MCF 10A (cell line): ENCODE measurements at regions of chr1 and their contacts with region 1.

Region 1: DNA sequence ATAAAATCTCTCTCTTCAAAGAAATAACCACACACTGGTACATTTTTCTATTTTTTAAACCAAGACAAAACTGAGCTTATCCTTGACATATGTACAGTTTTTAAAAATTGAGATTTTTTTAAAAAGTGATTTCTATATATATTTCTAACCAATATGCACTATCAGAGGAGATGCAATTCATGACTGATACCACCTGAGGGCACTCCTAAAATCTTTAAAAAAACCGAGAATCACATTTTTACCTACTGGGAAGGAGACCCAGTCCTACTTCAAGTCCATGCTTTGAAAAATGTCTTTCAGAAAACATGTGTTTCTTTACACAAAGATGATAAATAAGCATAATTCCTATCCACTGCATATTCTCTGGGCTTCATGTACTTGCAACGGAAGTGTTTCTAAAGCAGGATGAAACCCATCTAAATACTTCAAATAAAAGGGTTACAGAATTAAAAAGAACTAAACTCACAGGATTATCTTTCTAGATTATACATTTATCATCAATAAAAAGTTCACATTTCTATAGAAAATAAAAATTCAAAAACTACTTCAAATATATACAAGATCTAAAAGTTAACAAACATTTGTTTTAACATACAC is 98.6 kb downstream of the ENAH start:
- DNase-seq: peak; percentile 67
- H3K4me3 Mint-ChIP-seq: no peak overlapping the region
- H3K27ac Mint-ChIP-seq: no peak overlapping the region
- H3K4me1 Mint-ChIP-seq: peaks cover 2% of the 10 kb centered on the region
- H3K27me3 Mint-ChIP-seq: no peaks in the 10 kb centered on the region
- CTCF ChIP-seq: peak; percentile 85

Region 2: DNA sequence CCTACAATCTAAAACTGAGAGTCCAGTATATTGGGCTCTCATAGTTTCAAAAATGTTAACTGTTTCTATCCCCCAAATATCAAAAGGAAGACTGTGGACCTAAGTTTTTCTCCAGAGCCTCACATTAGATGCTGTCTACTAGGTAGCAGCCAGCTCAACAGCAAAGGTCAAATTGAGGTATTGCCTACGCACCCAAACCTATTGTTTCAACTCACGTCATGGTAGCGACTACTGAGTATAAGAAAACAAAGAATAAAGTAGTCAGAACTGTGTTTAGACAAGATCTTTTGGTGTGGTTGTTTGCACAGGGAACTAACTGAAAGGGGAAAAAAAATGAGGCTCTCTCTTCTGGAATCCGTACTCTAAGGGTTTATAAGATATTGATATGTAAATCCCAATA is 299.6 kb before region 1 on chr1:
- CTCF ChIA-PET with region 1: no interaction called
- POLR2A ChIA-PET with region 1: no interaction called
- intact Hi-C with region 1: no loop called
- DNase-seq: no peak
- H3K4me3 Mint-ChIP-seq: no peak overlapping the region
- H3K27ac Mint-ChIP-seq: no peak overlapping the region
- H3K4me1 Mint-ChIP-seq: peaks cover 11% of the 10 kb centered on the region
- H3K27me3 Mint-ChIP-seq: no peaks in the 10 kb centered on the region
- CTCF ChIP-seq: no peak

Region 3: DNA sequence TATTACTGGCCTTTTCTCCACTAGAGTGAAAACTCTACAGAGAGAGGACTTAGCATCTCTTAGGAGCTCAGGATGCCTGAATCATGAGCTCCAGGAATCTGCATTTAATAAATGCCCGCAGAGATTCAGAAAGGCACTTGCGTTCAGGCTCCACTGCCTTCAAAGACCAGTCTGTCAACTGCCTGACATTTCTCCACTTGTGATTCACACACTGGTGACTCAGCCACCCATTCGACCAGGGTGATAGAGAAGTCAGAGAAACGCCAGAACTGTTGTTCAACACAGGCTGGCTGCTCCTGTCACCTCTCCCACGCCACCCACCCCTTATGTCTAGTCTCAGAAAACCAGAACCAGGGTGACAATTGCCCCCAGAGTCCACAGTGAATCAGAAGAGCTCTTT is 99.6 kb before region 1 on chr1:
- CTCF ChIA-PET with region 1: no interaction called
- POLR2A ChIA-PET with region 1: no interaction called
- intact Hi-C with region 1: no loop called
- DNase-seq: peak; percentile 96
- H3K4me3 Mint-ChIP-seq: peak overlapping the region; percentile 2
- H3K27ac Mint-ChIP-seq: peak overlapping the region; percentile 60
- H3K4me1 Mint-ChIP-seq: peaks cover 61% of the 10 kb centered on the region
- H3K27me3 Mint-ChIP-seq: no peaks in the 10 kb centered on the region
- CTCF ChIP-seq: no peak

Region 4: DNA sequence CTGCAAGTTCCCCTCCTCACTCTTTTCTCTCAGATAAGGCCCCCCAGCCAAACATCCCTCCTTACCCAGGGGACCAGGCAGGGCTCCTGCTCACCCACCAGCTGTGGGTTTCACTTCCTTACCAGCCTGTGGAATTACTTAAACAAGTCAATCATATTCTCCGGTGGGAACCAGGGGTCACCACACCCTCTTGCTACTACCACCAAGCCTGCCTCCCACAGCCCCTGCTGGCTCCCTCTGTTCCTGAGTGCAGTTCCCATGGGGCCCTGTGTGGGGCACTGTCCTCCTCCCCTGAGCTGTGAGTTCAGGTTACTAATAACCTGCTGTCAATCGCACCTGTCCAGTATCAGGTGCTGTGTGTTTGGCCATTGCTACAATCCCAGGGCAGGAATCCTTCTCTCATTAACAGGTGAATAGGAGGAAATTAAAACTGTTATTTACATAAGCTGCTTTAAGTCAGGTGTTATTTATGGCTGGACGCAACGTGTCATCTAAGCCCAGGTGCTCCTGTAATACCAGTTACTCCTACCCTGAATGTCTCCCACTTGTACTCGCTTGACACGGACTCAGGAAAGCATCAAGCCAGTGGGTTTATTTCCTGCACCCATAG is 73.4 kb before region 1 on chr1:
- CTCF ChIA-PET with region 1: interaction called, 43 read pairs
- POLR2A ChIA-PET with region 1: no interaction called
- intact Hi-C with region 1: no loop called
- DNase-seq: peak; percentile 85
- H3K4me3 Mint-ChIP-seq: no peak overlapping the region
- H3K27ac Mint-ChIP-seq: no peak overlapping the region
- H3K4me1 Mint-ChIP-seq: peaks cover 7% of the 10 kb centered on the region
- H3K27me3 Mint-ChIP-seq: peaks cover 15% of the 10 kb centered on the region
- CTCF ChIP-seq: peak; percentile 100

Region 5: DNA sequence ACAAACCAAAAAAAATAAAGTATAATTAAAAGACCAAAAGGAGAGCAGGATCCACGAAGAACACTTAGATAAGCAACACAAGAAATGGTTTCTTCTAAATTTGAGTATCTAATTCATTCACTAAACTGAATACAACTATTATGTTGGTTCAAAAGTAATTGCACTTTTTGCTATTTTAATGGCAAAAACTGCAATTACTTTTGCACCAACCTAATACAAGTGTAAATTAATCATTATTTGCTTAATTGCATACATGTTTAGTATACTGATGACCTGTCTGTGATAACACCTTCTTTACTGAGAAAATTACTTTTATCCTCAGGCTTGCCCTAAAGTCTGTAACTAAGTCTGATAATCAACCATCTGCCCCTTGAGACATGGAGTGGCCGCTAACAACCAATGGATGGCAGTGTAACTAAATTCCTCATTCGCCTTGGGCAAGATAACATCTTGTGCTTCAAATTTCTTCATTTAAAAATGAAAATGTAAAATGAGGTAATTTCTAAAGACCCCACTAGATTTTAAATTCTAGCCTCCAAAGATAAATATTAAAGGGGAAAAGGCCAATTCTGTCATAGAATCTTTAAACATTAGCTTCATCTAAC is 13.4 kb after region 1 on chr1:
- CTCF ChIA-PET with region 1: interaction called, 19 read pairs
- POLR2A ChIA-PET with region 1: interaction called, 19 read pairs
- intact Hi-C with region 1: no loop called
- DNase-seq: peak; percentile 44
- H3K4me3 Mint-ChIP-seq: no peak overlapping the region
- H3K27ac Mint-ChIP-seq: no peak overlapping the region
- H3K4me1 Mint-ChIP-seq: peaks cover 13% of the 10 kb centered on the region
- H3K27me3 Mint-ChIP-seq: no peaks in the 10 kb centered on the region
- CTCF ChIP-seq: peak; percentile 20

Region 6: DNA sequence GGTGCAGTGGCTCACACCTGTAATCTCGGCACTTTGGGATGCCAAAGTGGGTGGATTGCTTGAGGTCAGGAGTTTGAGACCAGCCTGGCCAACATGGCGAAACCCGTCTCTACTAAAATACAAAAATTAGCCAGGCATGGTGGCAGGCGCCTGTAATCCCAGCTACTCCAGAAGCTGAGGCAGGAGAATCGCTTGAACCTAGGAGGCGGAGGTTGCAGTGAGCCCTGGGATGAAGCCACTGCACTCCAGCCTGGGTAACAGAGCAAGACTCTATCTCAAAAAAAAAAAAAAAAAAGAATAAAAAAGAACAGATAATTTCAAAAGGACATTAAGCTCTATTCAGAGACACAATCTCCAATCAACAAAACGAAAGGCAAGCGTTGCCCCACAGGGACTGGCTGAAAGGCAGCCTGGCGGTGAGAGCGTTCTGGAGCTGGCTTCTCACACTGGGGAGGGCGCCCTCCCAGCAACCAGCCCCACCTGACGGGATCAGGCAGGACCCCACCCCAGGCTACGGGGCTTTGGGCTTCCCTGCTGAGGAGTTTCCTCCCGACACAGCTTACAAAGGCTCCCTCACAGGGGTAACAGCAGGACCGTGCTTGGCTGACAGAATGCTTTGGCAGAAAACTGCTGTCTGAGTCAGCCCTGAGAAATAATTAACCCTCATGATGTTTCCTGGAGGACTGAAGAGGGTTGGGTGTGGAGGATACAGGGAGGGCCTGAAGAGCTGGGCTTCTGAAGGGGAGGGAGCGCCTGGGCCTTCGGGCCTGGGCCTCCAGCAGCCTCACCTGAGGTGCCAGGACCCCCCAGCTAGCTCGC is 192.3 kb after region 1 on chr1:
- CTCF ChIA-PET with region 1: interaction called, 4 read pairs
- POLR2A ChIA-PET with region 1: interaction called, 6 read pairs
- intact Hi-C with region 1: loop called (anchors 1 kb)
- DNase-seq: peak; percentile 98
- H3K4me3 Mint-ChIP-seq: peak overlapping the region; percentile 66
- H3K27ac Mint-ChIP-seq: peak overlapping the region; percentile 90
- H3K4me1 Mint-ChIP-seq: peaks cover 35% of the 10 kb centered on the region
- H3K27me3 Mint-ChIP-seq: no peaks in the 10 kb centered on the region
- CTCF ChIP-seq: no peak

Region 7: GRCh38 chr1:225977937-225978748 is 423.8 kb after region 1 on chr1:
- CTCF ChIA-PET with region 1: interaction called, 5 read pairs
- POLR2A ChIA-PET with region 1: interaction called, 3 read pairs
- intact Hi-C with region 1: loop called (anchors 5 kb)
- DNase-seq: no peak
- H3K4me3 Mint-ChIP-seq: no peak overlapping the region
- H3K27ac Mint-ChIP-seq: no peak overlapping the region
- H3K4me1 Mint-ChIP-seq: peaks cover 5% of the 10 kb centered on the region
- H3K27me3 Mint-ChIP-seq: no peaks in the 10 kb centered on the region
- CTCF ChIP-seq: no peak